ENCODE measurements at regions of chr4 and their contacts with region 1.

Region 1: GRCh38 chr4:145481164-145481941 is at the start of gene SMAD1:
- DNase-seq: peak; percentile 86 to 92 (median 91)
- ATAC-seq: peak; percentile 95 to 97 (median 95)
- H3K4me3 ChIP-seq: peak within 1 kb of the TSS; percentile 70 to 99 (median 85)
- H3K27ac ChIP-seq: peak within 1 kb of the TSS; percentile 92 to 99 (median 97)
- H3K4me1 ChIP-seq: peaks cover 0 to 39% (median 18%) of the 10 kb centered on the region in 12 donors
- H3K27me3 ChIP-seq: no peaks in the 10 kb centered on the region
- CTCF ChIP-seq: peak in 1 of 12 donors; percentile 9
- POLR2A ChIP-seq: peak in 1 of 2 donors; percentile 63
- total RNA-seq, gene SMAD1: 9.0 to 21.4 (median 15.2) TPM

Region 2: DNA sequence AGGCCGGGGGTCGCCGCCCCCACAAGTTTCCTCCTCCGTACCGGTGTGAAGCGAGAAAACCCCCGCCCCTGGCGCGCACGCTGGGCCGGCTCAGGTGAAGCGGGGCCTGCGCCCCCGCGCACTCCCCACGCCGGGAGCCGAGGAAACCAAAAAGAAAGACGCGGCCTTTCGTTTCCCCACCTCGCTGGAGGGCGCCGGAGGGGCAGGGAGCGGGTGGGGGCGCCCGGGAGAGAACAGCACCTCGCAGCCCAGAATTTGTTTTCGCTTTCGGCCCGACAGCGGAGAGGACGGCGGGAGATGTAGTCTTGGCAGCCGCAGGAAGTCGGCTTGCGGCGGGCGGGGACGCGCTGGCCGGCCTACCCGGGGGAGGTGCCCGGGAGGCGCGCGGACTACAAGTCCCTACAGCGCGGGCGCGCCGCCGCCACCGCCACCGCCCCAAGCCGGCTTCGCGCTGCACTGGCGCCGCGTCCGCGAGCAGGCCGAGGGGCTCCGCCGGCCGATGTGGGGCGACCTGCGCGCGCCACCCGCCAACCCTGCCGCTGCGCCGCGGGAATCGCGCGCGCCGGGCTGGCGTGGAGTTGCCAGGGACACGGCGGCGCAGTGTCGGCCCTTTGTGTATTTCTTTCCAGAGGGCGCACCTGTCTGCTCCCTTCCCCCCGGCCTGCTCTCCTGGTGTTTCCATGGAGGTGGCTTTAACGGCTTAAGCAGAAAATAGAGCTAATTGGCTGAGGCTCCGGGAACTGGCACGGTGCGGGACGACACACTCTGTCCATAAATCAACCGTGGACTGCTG is 300.9 kb before region 1 on chr4 and contains the start of gene OTUD4:
- intact Hi-C with region 1: loop called in 1 of 10 experiments (anchors 10 kb)
- DNase-seq: peak; percentile 96 to 98 (median 97)
- ATAC-seq: peak; percentile 93 to 97 (median 96)
- H3K4me3 ChIP-seq: peak within 1 kb of the TSS; percentile 51 to 94 (median 82)
- H3K27ac ChIP-seq: peak within 1 kb of the TSS; percentile 90 to 99 (median 96)
- H3K4me1 ChIP-seq: peaks cover 4 to 42% (median 28%) of the 10 kb centered on the region in 12 donors
- H3K27me3 ChIP-seq: no peaks in the 10 kb centered on the region
- CTCF ChIP-seq: peak in 4 of 12 donors; percentile 19 to 37 (median 30)
- POLR2A ChIP-seq: peak in 1 of 2 donors; percentile 48
- total RNA-seq, gene OTUD4: 23.9 to 42.1 (median 31.1) TPM

Region 3: DNA sequence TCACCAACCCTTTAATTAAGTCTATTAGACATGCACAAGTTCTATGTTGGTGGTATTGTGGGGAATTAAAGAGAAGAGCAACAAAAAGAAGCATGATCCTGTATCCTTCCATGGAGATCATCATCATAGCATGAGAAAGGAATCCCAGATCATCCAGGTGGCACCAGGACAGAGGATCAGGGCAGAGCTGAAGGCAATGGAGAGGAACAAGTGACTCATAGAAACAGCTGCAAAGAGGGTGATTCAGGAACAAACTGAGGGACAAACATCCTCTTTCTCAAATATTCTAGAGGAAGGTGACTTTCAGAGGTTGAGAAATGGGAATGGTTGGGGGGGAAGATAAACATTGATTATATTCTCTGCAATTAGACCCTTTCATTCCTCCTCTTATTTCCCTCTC is 195.4 kb before region 1 on chr4:
- intact Hi-C with region 1: loop called in 1 of 10 experiments (anchors 10 kb)
- DNase-seq: no peak
- ATAC-seq: no peak
- H3K4me3 ChIP-seq: no peak overlapping the region
- H3K27ac ChIP-seq: no peak overlapping the region
- H3K4me1 ChIP-seq: peaks cover 0 to 8% (median 0%) of the 10 kb centered on the region in 12 donors
- H3K27me3 ChIP-seq: no peaks in the 10 kb centered on the region
- CTCF ChIP-seq: no peak
- POLR2A ChIP-seq: no peak

Region 4: DNA sequence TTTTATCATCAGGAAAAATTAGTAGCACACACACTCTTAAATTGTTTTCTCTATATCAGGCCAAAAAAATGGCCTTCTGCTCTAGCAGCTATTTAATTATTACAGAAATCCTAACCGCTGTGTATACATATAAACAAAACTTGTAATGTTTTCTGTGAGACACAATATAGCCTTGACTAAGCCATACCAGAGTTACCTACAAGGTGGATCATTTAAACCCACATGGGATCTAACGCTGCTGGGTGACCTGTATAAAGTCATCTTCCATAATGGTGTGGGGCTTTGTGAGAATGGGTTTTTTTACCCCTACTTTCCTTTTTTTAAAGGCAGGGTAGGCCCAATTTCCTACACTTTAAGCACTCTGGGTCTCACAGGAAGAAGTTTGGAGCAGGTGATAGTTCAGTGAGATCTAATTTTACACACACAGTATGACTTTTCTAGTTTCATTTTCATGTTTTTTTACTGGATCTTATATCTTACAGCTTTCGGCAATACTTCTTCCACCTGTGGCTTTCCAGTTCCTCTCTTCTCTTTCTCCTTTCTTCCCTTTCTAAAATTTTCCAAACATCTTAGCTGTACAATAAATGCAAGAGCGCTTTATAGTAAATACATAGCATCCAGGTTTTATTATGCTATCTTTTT is 70.9 kb after region 1 on chr4:
- intact Hi-C with region 1: loop called in 8 of 10 experiments (anchors 2 to 10 kb)
- DNase-seq: no peak
- ATAC-seq: no peak
- H3K4me3 ChIP-seq: no peak overlapping the region
- H3K27ac ChIP-seq: peak overlapping the region in 1 of 12 donors; percentile 12
- H3K4me1 ChIP-seq: peaks cover 0 to 15% (median 2%) of the 10 kb centered on the region in 12 donors
- H3K27me3 ChIP-seq: no peaks in the 10 kb centered on the region
- CTCF ChIP-seq: no peak
- POLR2A ChIP-seq: no peak

Region 5: GRCh38 chr4:145609481-145610427 is 128.4 kb after region 1 on chr4:
- intact Hi-C with region 1: loop called in 2 of 10 experiments (anchors 5 kb)
- DNase-seq: peak in 3 of 5 donors; percentile 29 to 40 (median 32)
- ATAC-seq: peak in 3 of 4 donors; percentile 56 to 70 (median 59)
- H3K4me3 ChIP-seq: no peak overlapping the region
- H3K27ac ChIP-seq: no peak overlapping the region
- H3K4me1 ChIP-seq: peaks cover 0 to 10% (median 0%) of the 10 kb centered on the region in 12 donors
- H3K27me3 ChIP-seq: no peaks in the 10 kb centered on the region
- CTCF ChIP-seq: peak; percentile 54 to 87 (median 76)
- POLR2A ChIP-seq: no peak

Measured in heart left ventricle (tissue), 16 donors.